OCI-LY7 (cell line): ENCODE measurements at regions of chr1 and their contacts with region 1.

Region 1: DNA sequence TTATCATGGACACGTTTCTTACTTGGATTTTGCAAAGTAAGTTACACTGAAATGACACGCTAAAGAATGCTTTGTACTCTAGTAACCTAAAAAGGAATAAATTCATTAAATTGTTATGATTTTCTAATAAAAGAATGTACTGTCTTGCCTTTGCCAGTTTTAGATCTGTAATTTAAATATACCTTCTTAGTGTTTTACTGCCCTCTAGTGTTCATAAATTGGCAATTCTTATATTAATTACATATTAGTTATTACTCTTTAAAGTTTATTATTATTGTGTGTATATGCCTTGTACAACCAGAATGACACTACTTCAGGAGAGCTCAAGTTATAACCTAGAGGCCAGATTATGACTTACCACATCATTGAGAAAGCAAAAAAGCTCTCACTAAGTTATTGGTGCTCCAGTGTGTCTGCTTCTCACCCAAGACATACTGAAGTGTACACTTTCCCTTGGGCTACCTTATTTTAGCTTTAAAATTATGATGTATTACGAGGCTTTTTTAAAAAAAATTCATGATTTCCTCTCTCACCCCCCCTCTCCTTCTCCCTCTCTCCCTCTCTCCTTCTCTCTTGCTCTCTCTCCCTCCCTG is 169.9 kb downstream of the HS2ST1 start:
- DNase-seq: peak; percentile 77
- H3K4me3 ChIP-seq: no peak overlapping the region
- H3K27ac ChIP-seq: peak overlapping the region; percentile 64
- H3K4me1 ChIP-seq: peaks cover 36% of the 10 kb centered on the region
- CTCF ChIP-seq: peak; percentile 86

Region 2: DNA sequence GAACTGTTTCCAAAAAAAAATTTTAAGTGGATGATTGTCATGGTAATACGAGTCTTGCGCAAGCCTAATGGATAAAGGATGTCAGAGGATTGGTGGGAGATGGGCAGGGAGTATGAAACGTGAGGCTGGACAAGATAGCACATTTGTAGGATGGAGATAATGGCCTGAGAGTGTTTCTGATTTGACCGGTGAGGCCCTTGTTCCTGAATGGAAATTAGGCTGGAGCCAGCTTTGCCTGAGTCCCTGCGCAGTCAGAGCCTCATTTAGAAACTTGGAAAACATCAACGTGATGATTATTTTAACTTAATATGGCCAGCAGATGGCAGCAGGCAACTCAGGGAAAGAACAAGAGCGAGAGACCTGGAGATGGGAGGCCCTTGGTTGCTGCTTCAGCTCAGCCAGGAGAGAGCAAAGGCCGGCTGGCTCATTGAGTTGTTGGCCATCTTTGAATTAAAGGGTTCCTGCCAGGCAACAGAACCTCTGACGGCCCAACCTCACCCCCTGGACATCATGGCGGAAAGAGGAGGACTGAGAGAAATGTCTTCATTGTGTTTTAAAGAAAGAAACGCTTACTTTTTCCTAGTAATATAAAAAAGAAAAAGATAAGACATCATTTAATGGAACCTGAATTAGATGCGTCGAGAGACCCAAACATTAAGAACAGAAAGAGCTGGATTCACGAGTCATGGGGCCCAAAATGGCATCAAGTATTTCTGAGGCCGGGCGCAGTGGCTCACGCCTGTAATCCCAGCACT is 250.7 kb before region 1 on chr1:
- CTCF ChIA-PET with region 1: interaction called, 3 read pairs
- POLR2A ChIA-PET with region 1: interaction called, 24 read pairs
- intact Hi-C with region 1: loop called (anchors 1 kb)
- DNase-seq: peak; percentile 92
- H3K4me3 ChIP-seq: peak overlapping the region; percentile 73
- H3K27ac ChIP-seq: peak overlapping the region; percentile 66
- H3K4me1 ChIP-seq: peaks cover 35% of the 10 kb centered on the region
- CTCF ChIP-seq: peak; percentile 87

Region 3: GRCh38 chr1:86965012-86965826 is 119.1 kb before region 1 on chr1:
- CTCF ChIA-PET with region 1: no interaction called
- POLR2A ChIA-PET with region 1: interaction called, 14 read pairs
- intact Hi-C with region 1: loop called (anchors 2 kb)
- DNase-seq: peak; percentile 52
- H3K4me3 ChIP-seq: no peak overlapping the region
- H3K27ac ChIP-seq: peak overlapping the region; percentile 16
- H3K4me1 ChIP-seq: peaks cover 17% of the 10 kb centered on the region
- CTCF ChIP-seq: peak; percentile 88

Region 4: DNA sequence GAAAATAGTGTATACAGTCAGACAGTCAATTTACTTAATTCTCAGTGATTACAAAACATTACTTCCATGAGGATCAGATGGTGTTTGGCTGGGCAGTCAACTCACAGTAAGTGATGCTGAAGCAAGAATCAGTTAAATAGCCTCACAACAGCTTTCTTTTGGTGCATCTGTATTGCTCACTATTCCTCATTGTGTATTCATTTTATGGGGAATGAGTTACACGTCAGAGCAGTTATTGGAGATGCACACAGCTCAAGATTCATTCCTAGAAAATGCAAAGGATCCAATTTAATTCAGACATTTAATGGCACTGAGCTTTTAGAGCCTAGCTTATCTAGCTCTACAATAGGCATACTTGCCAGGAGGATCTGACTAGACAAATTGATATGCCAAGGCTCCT is 19.4 kb before region 1 on chr1:
- CTCF ChIA-PET with region 1: no interaction called
- POLR2A ChIA-PET with region 1: interaction called, 14 read pairs
- intact Hi-C with region 1: no loop called
- DNase-seq: no peak
- H3K4me3 ChIP-seq: no peak overlapping the region
- H3K27ac ChIP-seq: peak overlapping the region; percentile 49
- H3K4me1 ChIP-seq: peaks cover 69% of the 10 kb centered on the region
- CTCF ChIP-seq: no peak